SK-N-SH (cell line): ENCODE measurements at regions of chr19 and their contacts with region 1.

Region 1: GRCh38 chr19:39125554-39126311 is at the start of gene PAK4:
- DNase-seq: peak; percentile 100
- H3K4me3 ChIP-seq: peak within 1 kb of the TSS; percentile 83 to 91
- H3K27ac ChIP-seq: peak within 1 kb of the TSS; percentile 65 to 76; a peak in 3 of 4 replicates
- H3K4me1 ChIP-seq: peaks cover 0 to 40% of the 10 kb centered on the region in 2 experiments; a peak in 1 of 4 replicates
- H3K27me3 ChIP-seq: no peaks in the 10 kb centered on the region
- CTCF ChIP-seq: no peak
- EP300 ChIP-seq: no peak
- RAD21 ChIP-seq: no peak
- polyA plus RNA-seq, gene PAK4: 24.7 and 36.4 TPM in 2 replicates

Region 2: DNA sequence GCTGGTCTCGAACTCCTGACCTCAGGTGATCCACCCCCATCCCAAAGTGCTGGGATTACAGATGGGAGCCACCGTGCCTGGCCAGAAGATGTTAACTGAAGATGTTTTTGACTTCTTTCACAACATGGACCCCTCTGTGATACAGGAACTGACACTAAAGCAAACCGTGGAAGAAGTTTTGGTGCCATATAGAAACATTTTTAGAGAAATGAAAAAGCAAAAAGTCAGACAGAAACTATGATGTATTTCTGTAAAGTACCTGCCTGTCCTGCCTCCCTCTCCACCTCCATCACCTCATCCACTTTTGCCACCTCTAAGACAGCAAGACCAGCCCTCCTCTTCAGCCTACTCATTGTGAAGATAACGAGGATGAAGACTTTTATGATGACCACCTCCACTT is 104.7 kb before region 1 on chr19:
- CTCF ChIA-PET with region 1: no interaction called
- POLR2A ChIA-PET with region 1: no interaction called
- DNase-seq: no peak
- H3K4me3 ChIP-seq: no peak overlapping the region
- H3K27ac ChIP-seq: no peak overlapping the region
- H3K4me1 ChIP-seq: no peaks in the 10 kb centered on the region
- H3K27me3 ChIP-seq: no peaks in the 10 kb centered on the region
- CTCF ChIP-seq: no peak
- EP300 ChIP-seq: no peak
- RAD21 ChIP-seq: no peak

Region 3: GRCh38 chr19:39138221-39139211 is 12.8 kb after region 1 on chr19:
- CTCF ChIA-PET with region 1: interaction called, 10 read pairs
- POLR2A ChIA-PET with region 1: interaction called, 4 read pairs
- DNase-seq: peak; percentile 29
- H3K4me3 ChIP-seq: no peak overlapping the region
- H3K27ac ChIP-seq: peak overlapping the region in 1 of 2 experiments; percentile 96; a peak in 2 of 4 replicates
- H3K4me1 ChIP-seq: peaks cover 9 to 36% of the 10 kb centered on the region in 2 experiments; a peak in 3 of 4 replicates
- H3K27me3 ChIP-seq: no peaks in the 10 kb centered on the region
- CTCF ChIP-seq: no peak
- EP300 ChIP-seq: no peak
- RAD21 ChIP-seq: no peak

Region 4: DNA sequence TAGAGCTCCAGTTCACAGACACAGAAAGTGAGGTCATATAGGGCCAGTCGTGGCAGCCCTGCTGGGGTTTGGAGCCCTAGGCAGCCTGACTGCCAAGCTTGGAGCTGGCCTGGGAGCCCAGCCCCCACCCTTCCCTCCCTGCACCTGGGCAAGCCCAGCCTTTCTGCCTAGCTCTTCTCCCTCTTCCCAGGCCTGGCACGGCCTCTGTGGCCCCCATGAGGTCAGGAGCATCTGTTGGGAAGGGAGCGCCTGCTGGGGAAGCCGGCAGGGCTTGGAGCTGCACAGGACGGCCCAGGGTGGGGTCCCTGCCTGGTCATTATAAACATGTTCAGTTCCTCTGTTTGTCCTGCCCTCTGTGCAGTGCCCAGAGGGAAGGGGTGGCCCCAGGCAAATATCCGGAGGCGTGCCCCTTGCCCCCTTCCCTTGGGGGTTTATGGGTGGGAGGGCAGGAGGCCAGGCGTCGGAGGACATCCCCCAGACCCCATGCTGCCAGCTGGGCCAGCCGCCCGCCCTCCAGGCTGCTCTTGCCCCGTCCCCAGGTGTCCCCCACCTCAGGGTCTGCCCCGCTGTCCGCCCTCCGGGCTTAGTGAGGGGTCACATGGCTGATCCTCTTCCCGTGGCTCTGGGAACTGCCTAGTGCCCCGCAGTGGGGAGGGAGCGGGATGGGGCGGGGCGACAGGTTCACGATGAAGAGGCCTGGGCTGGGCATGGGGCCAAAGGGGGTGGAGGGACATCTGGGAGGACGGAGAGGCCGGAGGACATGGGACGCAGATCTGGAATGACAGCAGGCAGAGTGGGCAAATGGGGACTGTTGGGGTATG is 41.0 kb after region 1 on chr19:
- CTCF ChIA-PET with region 1: interaction called, 13 read pairs
- POLR2A ChIA-PET with region 1: no interaction called
- DNase-seq: peak; percentile 92
- H3K4me3 ChIP-seq: no peak overlapping the region
- H3K27ac ChIP-seq: peak overlapping the region in 1 of 2 experiments; percentile 69; a peak in 2 of 4 replicates
- H3K4me1 ChIP-seq: peaks cover 0 to 37% of the 10 kb centered on the region in 2 experiments; a peak in 1 of 4 replicates
- H3K27me3 ChIP-seq: no peaks in the 10 kb centered on the region
- CTCF ChIP-seq: no peak
- EP300 ChIP-seq: no peak; a peak in 1 of 4 replicates
- RAD21 ChIP-seq: peak; percentile 28; the same call in 1 of the 2 replicates

Region 5: DNA sequence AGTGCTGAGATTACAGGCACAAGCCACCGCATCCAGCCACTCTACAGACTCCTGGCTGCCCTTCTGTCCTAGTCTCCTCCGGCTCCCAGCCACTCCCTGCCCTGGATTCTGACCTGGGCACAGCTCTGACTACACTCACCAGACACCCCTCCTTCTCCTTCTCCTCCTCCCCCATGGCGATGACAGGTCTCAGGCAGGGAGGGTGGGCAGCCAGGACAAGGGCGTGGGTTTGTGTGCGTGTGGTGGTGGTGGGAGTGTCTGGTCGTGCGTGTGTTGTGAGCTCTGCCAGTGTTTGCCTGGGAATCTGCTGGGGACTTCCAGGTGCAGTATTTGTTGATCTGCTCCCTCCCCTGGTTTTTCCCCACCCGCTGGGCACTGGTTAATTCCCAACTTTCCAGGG is 68.1 kb after region 1 on chr19:
- CTCF ChIA-PET with region 1: interaction called, 36 read pairs
- POLR2A ChIA-PET with region 1: no interaction called
- DNase-seq: no peak
- H3K4me3 ChIP-seq: no peak overlapping the region
- H3K27ac ChIP-seq: no peak overlapping the region
- H3K4me1 ChIP-seq: peaks cover 0 to 11% of the 10 kb centered on the region in 2 experiments; a peak in 1 of 4 replicates
- H3K27me3 ChIP-seq: peaks cover 27% of the 10 kb centered on the region; the same call in 1 of the 2 replicates
- CTCF ChIP-seq: no peak
- EP300 ChIP-seq: no peak
- RAD21 ChIP-seq: no peak

Region 6: DNA sequence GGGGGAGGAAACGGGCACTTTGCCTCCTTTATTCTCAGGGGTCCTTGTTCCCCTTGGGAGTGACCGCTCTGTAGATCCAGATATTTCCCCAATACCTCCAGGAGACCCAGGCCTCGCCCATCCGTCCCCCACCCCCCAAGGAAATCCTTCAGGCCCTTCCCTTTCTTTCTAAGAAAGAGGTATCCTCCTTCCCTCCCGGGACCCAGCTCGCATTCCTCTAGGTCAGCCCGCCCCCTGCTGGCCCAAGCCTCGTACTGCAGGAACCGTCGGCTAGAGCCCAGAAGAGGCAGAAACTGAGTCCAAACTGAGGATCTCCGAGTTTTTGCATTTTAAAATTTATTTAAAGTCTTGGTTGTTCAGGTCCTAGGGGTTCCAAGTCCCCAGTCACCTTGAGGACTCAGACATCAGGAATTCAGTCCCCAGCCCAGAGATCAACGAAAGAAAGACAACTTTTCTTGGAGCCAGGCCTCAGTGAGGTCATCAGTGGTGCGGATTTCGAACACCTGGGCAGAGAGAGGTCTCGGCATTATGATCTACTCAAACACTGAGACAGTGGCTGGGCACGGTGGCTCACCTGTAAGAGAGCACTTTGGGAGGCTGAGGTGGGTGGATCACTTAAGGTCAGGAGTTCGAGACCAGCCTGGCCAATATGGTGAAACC is 202.4 kb after region 1 on chr19:
- CTCF ChIA-PET with region 1: interaction called, 56 read pairs
- POLR2A ChIA-PET with region 1: no interaction called
- DNase-seq: peak; percentile 84
- H3K4me3 ChIP-seq: no peak overlapping the region; a peak in 1 of 4 replicates
- H3K27ac ChIP-seq: no peak overlapping the region
- H3K4me1 ChIP-seq: no peaks in the 10 kb centered on the region
- H3K27me3 ChIP-seq: no peaks in the 10 kb centered on the region
- CTCF ChIP-seq: peak; percentile 97
- EP300 ChIP-seq: no peak
- RAD21 ChIP-seq: peak; percentile 95

Region 7: GRCh38 chr19:39341719-39342604 is 216.2 kb after region 1 on chr19 and contains the start of gene SAMD4B:
- CTCF ChIA-PET with region 1: interaction called, 10 read pairs
- POLR2A ChIA-PET with region 1: no interaction called
- DNase-seq: peak; percentile 99
- H3K4me3 ChIP-seq: peak within 1 kb of the TSS; percentile 76 to 89
- H3K27ac ChIP-seq: peak within 1 kb of the TSS; percentile 77 to 83
- H3K4me1 ChIP-seq: peaks cover 0 to 15% of the 10 kb centered on the region in 2 experiments; a peak in 3 of 4 replicates
- H3K27me3 ChIP-seq: no peaks in the 10 kb centered on the region
- CTCF ChIP-seq: peak; percentile 60
- EP300 ChIP-seq: no peak; a peak in 1 of 4 replicates
- RAD21 ChIP-seq: 0 out of 2 replicates have a peak, but pooled peaks have one; percentile 7
- polyA plus RNA-seq, gene SAMD4B: 62.2 and 83.0 TPM in 2 replicates